ENCODE measurements at regions of chr4 and their contacts with region 1.

Region 1: GRCh38 chr4:2220016-2220630 is 21.8 kb downstream of the HAUS3 start:
- DNase-seq: peak; percentile 82
- H3K4me3 Mint-ChIP-seq: no peak overlapping the region
- H3K27ac Mint-ChIP-seq: no peak overlapping the region
- H3K4me1 Mint-ChIP-seq: peaks cover 16% of the 10 kb centered on the region
- H3K27me3 Mint-ChIP-seq: no peaks in the 10 kb centered on the region

Region 2: DNA sequence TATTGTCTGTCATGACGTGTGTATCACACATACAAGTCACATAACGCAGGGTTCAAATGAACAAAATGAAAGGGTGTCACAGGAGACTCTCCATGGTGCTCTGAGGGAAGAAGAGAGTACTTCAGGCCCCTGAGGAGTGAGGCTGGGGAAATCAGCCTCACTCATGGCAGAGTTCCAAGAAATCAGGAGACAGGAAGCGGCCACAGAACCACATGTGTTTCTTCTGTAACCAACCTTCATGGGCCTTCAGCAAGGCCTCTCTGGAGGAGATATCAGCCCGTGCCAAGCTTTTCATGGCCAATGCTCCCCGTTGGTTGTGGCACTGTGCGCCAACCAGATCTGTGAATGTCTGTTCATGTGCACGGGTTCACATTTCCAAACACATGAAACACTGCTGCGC is 85.0 kb before region 1 on chr4:
- CTCF ChIA-PET with region 1: no interaction called
- POLR2A ChIA-PET with region 1: no interaction called
- DNase-seq: peak; percentile 57
- H3K4me3 Mint-ChIP-seq: no peak overlapping the region
- H3K27ac Mint-ChIP-seq: no peak overlapping the region
- H3K4me1 Mint-ChIP-seq: peaks cover 16% of the 10 kb centered on the region
- H3K27me3 Mint-ChIP-seq: peaks cover 4% of the 10 kb centered on the region

Region 3: DNA sequence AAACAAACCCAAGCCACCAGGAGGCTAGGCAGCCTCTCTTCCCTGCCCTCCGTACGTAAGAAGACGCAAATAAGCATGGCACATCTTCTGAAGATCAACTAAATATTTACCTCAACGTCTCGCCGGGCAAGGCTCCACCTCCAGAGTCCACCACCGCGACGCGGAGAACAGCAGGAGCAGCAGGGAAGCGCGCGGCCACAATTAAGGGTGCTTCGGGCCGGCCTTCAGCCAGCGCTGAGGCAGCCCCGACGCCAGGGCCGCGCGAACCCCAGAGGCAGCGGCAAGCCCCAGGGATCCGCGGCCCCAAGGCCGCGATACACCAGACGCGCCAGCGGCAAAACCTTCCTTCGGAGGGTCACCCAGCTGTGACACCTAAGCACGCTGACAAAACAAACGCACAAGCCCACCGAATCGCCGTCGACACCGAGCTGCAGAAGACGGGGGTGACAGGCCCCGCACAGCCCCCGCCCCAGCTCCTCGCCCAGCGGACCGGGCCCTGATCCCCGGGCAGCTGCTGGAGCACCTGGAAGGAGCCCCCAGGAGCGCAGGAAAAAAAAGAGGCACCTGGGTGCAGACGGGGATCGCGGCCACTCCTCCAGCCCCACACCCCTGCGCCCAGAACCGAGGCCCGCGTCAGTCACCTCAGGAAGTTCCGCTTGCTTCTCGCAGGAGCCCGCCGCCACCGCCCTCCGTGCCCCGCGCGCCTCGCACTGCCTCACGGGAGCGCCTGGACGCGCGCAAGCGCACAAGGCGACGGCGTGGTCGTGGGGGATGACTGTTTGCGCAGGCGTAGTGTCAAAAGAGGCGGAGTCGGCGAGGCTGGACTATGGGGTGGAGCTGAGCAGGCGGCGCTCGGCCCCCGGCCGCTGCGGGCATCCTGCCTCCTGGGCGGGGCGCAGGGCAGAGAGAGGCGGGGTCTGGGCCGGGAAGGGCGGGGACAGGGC is 21.6 kb after region 1 on chr4 and contains the starts of genes HAUS3 and POLN:
- CTCF ChIA-PET with region 1: interaction called, 25 read pairs
- POLR2A ChIA-PET with region 1: interaction called, 8 read pairs
- DNase-seq: peak; percentile 100
- H3K4me3 Mint-ChIP-seq: peak within 1 kb of the TSS; percentile 95
- H3K27ac Mint-ChIP-seq: peak within 1 kb of the TSS; percentile 92
- H3K4me1 Mint-ChIP-seq: peaks cover 59% of the 10 kb centered on the region
- H3K27me3 Mint-ChIP-seq: no peaks in the 10 kb centered on the region
- total RNA-seq, gene HAUS3: 27.1 to 27.4 TPM
- total RNA-seq, gene POLN: 3.3 to 4.0 TPM

Region 4: DNA sequence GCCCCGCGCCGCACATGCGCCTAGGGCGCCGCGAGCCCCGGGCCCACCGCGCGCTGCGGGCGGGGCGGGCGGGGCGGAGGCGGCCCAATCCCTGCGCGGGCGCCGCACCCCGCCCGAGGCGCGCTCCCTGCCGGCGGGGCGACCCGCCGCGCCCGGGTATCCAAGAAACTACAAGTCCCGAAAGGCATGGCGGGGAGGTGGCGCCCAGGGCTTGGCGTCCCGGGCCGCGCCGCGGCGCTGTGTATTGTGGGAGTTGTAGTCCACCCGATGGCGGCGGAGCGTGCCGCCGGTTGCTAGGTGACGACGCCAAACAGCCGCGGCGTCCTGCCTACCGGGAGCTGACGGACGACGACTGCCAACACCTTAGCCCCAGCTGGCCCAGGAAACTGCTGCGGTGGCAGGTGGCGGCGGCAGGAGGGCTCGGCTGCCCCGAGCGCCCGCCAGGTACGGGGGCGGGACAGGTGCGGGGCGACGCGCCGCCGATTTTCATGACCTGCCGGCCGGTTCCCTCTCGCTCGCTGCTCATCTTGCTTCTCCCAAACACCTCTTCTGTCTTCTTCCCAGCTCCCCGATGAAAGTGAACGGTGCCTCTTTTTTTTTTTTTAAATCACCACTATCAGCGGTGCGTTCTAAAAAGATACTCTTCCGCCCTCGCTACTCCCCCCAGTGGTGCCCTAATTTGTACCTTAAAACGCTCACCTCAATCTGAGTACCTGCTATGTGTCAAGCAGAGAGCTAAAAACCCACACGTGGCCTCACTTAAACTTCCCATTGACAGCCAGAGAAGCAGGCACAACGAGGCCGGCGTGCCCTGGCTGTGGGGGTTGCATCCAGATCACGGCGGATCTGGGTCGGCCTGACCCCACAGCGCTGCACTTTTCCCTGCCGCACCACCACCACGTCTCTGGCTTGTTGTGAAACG is 198.8 kb after region 1 on chr4 and contains the start of gene CFAP99:
- CTCF ChIA-PET with region 1: interaction called, 15 read pairs
- POLR2A ChIA-PET with region 1: no interaction called
- DNase-seq: peak; percentile 99
- H3K4me3 Mint-ChIP-seq: peak within 1 kb of the TSS; percentile 92
- H3K27ac Mint-ChIP-seq: peak within 1 kb of the TSS; percentile 75
- H3K4me1 Mint-ChIP-seq: peaks cover 40% of the 10 kb centered on the region
- H3K27me3 Mint-ChIP-seq: peaks cover 32% of the 10 kb centered on the region
- total RNA-seq, gene CFAP99: 0.08 TPM

Region 5: DNA sequence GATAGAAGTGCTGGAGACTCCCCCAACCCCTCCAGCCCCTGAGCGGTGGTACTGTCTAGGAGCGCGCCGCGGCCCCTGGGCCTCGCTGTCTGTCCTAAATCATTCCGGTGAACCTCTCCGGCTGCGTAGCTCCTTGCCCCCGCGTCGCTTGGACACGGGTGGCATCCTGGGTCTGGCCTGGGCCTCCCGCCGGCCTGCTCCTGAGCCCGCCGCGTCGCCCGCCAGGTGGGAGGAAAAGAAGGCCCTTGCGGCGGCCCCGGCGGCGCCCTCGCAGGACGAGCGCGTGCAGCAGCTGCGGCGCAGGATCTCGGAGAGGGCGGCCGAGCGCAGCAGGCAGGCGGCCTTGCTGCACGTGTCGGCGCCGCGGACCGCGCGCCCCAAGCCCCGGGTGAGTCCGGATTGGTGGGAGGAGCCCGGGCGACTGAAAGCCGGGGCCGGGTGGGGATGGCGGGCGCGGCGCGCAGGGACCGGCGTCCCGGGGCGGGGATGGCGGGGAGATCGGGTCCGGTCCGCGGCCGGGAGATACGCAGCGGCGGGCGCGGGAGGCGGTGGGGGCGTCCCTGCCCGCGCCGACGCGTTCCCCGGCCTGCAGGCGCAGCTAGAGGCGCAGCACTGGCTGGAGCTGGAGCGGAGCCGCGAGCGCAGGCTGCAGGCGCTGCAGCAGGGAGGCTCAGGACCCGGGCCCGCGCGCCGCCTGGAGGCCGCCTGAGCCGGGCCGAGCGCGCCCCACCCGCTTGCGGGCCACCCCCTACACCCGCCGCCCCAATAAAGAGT is 242.3 kb after region 1 on chr4:
- CTCF ChIA-PET with region 1: interaction called, 18 read pairs
- POLR2A ChIA-PET with region 1: interaction called, 3 read pairs
- DNase-seq: peak; percentile 69
- H3K4me3 Mint-ChIP-seq: peak overlapping the region; percentile 64
- H3K27ac Mint-ChIP-seq: no peak overlapping the region
- H3K4me1 Mint-ChIP-seq: peaks cover 24% of the 10 kb centered on the region
- H3K27me3 Mint-ChIP-seq: peaks cover 12% of the 10 kb centered on the region

Measured in activated CD4-positive, alpha-beta memory T cell treated with anti-CD3 and anti-CD28 coated beads, Interleukin-2, amount 10 ng/mL, durations not matched to agents 7 days and 5 days (primary cell).